ENCODE measurements at regions of chr17 and their contacts with region 1.

Region 1: GRCh38 chr17:63621766-63622519 is at the start of gene MAP3K3:
- DNase-seq: peak; percentile 99
- H3K4me3 ChIP-seq: peak within 1 kb of the TSS; percentile 64
- H3K27ac ChIP-seq: no peak within 1 kb of the TSS
- H3K4me1 ChIP-seq: peaks cover 12% of the 10 kb centered on the region; the same call in 1 of the 2 replicates
- H3K27me3 ChIP-seq: no peaks in the 10 kb centered on the region
- CTCF ChIP-seq: no peak; the same call in 1 of the 2 replicates
- total RNA-seq, gene MAP3K3: 12.9 and 14.1 TPM in 2 replicates

Region 2: DNA sequence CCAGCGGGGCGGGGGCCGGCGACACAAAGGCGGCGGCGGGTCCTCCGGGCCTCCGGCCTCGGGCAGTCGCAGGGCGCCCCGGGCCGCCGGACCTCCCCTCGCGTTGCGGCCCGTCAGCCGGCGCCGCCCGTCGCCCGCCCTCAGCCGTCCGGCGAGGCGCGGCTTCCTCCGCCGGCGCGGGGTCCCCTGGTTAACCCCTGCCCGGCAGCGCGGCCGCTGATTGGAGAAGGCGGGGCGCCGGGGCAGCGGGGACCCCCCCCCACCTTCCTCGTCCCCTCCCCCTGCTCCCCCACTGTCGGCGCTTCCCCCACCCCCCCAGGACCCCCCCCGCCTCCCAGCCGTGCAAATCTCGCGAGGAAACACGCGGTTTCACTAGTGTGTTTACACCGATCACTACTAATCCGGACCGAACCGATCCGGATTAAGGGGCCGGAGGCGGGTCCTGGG is 1143.5 kb before region 1 on chr17 and contains the start of gene TLK2:
- CTCF ChIA-PET with region 1: no interaction called
- POLR2A ChIA-PET with region 1: interaction called, 12 read pairs
- intact Hi-C with region 1: no loop called
- DNase-seq: peak; percentile 51 to 84
- H3K4me3 ChIP-seq: peak within 1 kb of the TSS; percentile 93
- H3K27ac ChIP-seq: peak within 1 kb of the TSS; percentile 61
- H3K4me1 ChIP-seq: peaks cover 18% of the 10 kb centered on the region
- H3K27me3 ChIP-seq: no peaks in the 10 kb centered on the region
- CTCF ChIP-seq: no peak
- total RNA-seq, gene TLK2: 32.6 and 40.7 TPM in 2 replicates

Region 3: DNA sequence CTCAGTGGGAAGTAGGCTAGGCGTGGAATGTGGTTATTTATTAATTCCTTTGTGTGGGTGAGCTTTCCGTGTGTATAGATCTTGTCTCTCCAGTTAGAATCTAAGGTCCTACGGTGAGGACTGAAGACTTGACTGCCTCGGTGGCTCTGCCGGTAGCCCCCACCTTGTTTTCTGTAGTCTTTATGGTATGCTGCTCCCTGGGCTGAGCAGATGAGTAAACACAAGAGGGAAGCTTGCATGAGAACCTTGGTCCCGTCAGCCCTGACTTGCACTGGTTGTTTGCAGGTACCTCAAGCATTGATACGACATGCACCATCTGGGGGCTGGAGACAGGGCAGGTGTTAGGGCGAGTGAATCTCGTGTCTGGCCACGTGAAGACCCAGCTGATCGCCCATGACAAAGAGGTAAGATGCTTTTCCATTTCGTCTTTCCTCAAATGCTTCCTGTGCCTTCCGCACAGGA is 42.4 kb before region 1 on chr17:
- CTCF ChIA-PET with region 1: no interaction called
- POLR2A ChIA-PET with region 1: no interaction called
- intact Hi-C with region 1: no loop called
- DNase-seq: no peak
- H3K4me3 ChIP-seq: no peak overlapping the region
- H3K27ac ChIP-seq: no peak overlapping the region
- H3K4me1 ChIP-seq: no peaks in the 10 kb centered on the region
- H3K27me3 ChIP-seq: no peaks in the 10 kb centered on the region
- CTCF ChIP-seq: no peak

Region 4: DNA sequence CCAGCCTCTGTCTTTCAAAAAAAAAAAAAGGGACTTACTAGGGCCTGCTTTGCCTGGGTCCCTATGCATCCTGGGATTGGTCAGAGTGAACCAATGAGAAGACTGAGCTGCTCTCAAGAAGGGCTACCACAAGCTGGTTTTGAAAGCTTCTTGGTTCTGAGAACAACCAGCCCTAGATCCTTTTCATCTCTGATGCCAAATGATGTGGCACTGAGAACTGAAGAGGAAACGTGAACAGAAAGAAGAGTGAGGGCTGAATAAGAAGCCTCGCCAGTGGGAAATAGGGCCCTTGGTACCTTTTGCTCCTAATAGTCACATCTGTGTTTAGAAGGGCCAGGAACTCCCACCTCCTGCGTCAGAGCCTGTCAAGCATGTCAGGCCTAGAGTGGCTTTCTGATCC is 10.6 kb before region 1 on chr17:
- CTCF ChIA-PET with region 1: interaction called, 11 read pairs
- POLR2A ChIA-PET with region 1: no interaction called
- intact Hi-C with region 1: no loop called
- DNase-seq: no peak
- H3K4me3 ChIP-seq: no peak overlapping the region
- H3K27ac ChIP-seq: no peak overlapping the region
- H3K4me1 ChIP-seq: no peaks in the 10 kb centered on the region
- H3K27me3 ChIP-seq: no peaks in the 10 kb centered on the region
- CTCF ChIP-seq: no peak

Region 5: GRCh38 chr17:63697341-63698286 is 75.7 kb after region 1 on chr17:
- CTCF ChIA-PET with region 1: no interaction called
- POLR2A ChIA-PET with region 1: no interaction called
- intact Hi-C with region 1: loop called (anchors 5 kb)
- DNase-seq: peak in 1 of 2 experiments; percentile 42
- H3K4me3 ChIP-seq: no peak overlapping the region
- H3K27ac ChIP-seq: no peak overlapping the region
- H3K4me1 ChIP-seq: no peaks in the 10 kb centered on the region
- H3K27me3 ChIP-seq: no peaks in the 10 kb centered on the region
- CTCF ChIP-seq: peak; percentile 60; the same call in 1 of the 2 replicates

Region 6: DNA sequence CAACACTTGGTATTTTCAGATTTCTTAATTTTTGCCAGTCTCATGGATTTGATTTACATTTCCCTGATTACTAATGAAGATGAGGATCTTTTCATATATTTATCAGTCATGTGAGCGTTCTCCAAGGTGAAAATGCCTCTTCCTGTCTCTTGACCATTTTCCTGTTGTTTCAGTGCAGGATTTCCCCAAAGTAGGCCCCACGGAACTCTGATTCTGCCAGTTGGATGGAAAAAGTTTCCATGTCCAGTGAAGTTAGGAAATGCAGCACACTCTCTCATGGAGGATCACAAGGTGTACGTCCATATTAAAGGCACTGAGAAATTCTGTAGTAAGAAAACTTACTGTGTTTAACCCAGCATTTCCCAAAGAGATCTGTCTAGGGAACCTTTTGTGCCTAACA is 94.5 kb after region 1 on chr17:
- CTCF ChIA-PET with region 1: no interaction called
- POLR2A ChIA-PET with region 1: no interaction called
- intact Hi-C with region 1: no loop called
- DNase-seq: no peak
- H3K4me3 ChIP-seq: no peak overlapping the region
- H3K27ac ChIP-seq: no peak overlapping the region
- H3K4me1 ChIP-seq: no peaks in the 10 kb centered on the region
- H3K27me3 ChIP-seq: no peaks in the 10 kb centered on the region
- CTCF ChIP-seq: no peak

Region 7: GRCh38 chr17:63773381-63774140 is 151.6 kb after region 1 on chr17 and contains the start of gene CCDC47:
- CTCF ChIA-PET with region 1: no interaction called
- POLR2A ChIA-PET with region 1: interaction called, 13 read pairs
- intact Hi-C with region 1: no loop called
- DNase-seq: peak; percentile 96 to 99
- H3K4me3 ChIP-seq: peak within 1 kb of the TSS; percentile 80
- H3K27ac ChIP-seq: peak within 1 kb of the TSS; percentile 96
- H3K4me1 ChIP-seq: peaks cover 50% of the 10 kb centered on the region
- H3K27me3 ChIP-seq: no peaks in the 10 kb centered on the region
- CTCF ChIP-seq: no peak
- total RNA-seq, gene CCDC47: 64.0 and 89.3 TPM in 2 replicates

Region 8: DNA sequence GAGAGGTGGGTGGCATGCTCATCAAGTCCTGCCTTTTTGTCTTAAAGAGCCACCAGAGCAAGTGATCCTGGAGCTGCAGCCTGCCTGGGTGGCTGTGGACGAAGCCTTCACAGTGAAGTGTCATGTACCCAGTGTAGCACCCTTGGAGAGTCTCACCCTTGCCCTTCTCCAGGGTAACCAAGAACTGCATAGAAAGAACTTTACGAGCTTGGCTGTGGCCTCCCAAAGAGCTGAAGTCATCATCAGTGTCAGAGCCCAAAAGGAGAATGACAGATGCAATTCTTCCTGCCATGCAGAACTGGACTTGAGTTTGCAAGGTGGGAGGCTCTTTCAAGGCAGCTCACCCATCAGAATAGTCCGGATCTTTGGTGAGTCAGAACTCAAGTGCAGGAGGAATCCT is 237.3 kb after region 1 on chr17:
- CTCF ChIA-PET with region 1: no interaction called
- POLR2A ChIA-PET with region 1: interaction called, 22 read pairs
- intact Hi-C with region 1: no loop called
- DNase-seq: no peak
- H3K4me3 ChIP-seq: no peak overlapping the region
- H3K27ac ChIP-seq: no peak overlapping the region
- H3K4me1 ChIP-seq: no peaks in the 10 kb centered on the region
- H3K27me3 ChIP-seq: peaks cover 10% of the 10 kb centered on the region
- CTCF ChIP-seq: no peak

Measured in PC-9 (cell line).